Tibial artery (tissue), 4 donors: ENCODE measurements at regions of chr4 and their contacts with region 1.

Region 1: GRCh38 chr4:76430519-76431388 is 4.3 kb upstream of the SHROOM3 start:
- DNase-seq: no peak
- H3K4me3 ChIP-seq: no peak overlapping the region
- H3K27ac ChIP-seq: no peak overlapping the region
- H3K4me1 ChIP-seq: peaks cover 0 to 11% (median 3%) of the 10 kb centered on the region in 4 donors
- H3K27me3 ChIP-seq: no peaks in the 10 kb centered on the region
- CTCF ChIP-seq: peak; percentile 60 to 72

Region 2: DNA sequence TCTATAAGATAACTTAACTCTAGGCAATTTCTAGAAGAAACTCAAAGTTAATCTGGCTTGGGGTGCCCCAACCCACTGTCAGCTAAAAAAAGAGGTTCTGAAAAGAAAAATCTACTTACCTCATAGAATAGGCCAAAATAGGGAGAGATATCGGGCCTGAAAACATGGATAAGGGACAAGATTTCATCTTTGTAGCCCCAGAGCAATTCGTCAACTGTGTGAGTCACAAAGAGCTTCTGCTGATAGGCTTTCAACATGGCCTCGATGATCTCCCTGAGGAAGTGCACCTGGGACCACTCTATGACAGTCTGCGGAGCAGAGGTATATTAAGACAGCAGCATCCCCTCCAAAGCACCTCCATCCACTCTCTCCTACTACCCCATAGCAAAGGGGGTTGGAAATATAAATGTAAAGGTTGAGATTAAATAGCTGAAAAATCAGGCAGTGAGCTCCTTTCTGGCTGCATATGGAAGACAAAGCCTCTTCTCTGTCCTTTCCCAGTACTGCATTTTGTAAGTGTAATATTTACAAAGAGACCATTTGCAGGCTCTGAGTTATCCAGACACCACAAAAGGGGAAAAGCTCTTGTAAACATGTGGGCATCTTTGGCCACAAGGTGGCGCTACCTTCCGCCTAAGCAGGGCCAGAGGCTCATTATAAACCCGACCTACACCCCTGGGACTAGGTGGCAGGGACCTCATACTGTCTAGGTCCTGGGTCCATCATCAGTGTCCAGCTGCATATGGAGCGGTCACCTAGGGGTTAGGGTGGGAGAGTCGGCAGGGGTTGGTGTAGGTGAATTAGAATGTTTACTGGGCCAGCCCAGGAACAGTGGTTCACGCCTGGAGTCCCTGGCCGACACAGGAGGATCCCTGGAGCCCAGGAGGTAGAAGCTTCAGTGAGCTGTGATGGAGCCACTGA is 251.1 kb before region 1 on chr4:
- intact Hi-C with region 1: loop called (anchors 5 kb)
- DNase-seq: peak; percentile 85 to 87
- H3K4me3 ChIP-seq: no peak overlapping the region
- H3K27ac ChIP-seq: no peak overlapping the region
- H3K4me1 ChIP-seq: peaks cover 0 to 4% (median 0%) of the 10 kb centered on the region in 4 donors
- H3K27me3 ChIP-seq: no peaks in the 10 kb centered on the region
- CTCF ChIP-seq: peak; percentile 82 to 84

Region 3: DNA sequence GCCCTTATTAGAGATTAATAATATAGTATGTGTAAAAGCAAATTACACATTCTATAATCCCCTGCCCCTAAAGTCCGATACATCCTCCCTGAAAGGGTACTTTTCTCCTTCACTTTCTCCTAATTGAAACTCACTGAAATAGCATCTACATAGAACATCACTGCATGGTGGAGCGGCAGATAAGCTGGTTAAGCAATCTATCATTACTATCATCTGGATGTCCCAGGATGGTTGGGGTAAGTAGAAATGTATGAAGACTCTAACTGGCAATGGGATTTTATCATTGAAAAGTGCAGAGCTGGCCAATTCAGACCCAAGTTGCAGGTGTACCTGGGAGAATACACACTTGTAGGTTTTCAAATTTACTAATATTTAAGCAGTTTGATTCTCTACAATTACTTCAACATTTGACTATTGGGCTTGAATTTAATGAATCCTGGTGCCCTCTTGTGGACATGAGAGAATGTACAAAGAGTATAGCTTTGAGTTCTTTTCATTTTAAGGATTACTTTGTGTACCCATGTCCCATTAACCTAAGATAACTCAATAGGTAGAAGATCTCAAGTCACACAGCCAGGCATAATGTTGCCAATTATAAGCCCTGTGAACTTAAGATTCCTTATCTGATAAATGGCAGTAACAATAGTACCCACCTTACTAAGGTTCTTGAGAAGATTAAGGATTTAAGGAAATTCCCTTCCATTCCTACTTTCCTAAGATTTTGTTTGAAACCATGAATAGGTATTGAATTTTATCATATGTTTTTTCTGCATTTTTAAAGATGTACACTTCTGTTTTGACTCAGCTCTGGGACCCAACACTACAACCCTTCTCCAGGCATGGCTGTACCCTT is 74.1 kb after region 1 on chr4:
- intact Hi-C with region 1: loop called (anchors 5 kb)
- DNase-seq: no peak
- H3K4me3 ChIP-seq: no peak overlapping the region
- H3K27ac ChIP-seq: no peak overlapping the region
- H3K4me1 ChIP-seq: no peaks in the 10 kb centered on the region
- H3K27me3 ChIP-seq: no peaks in the 10 kb centered on the region
- CTCF ChIP-seq: peak; percentile 71 to 77

Region 4: GRCh38 chr4:76758290-76758882 is 327.6 kb after region 1 on chr4:
- intact Hi-C with region 1: loop called (anchors 10 kb)
- DNase-seq: peak in 1 of 2 donors; percentile 32
- H3K4me3 ChIP-seq: no peak overlapping the region
- H3K27ac ChIP-seq: peak overlapping the region; percentile 74 to 75
- H3K4me1 ChIP-seq: peaks cover 0 to 56% (median 23%) of the 10 kb centered on the region in 4 donors
- H3K27me3 ChIP-seq: no peaks in the 10 kb centered on the region
- CTCF ChIP-seq: peak; percentile 66 to 75